Left colon (tissue), 2 donors: ENCODE measurements at regions of chr12 and their contacts with region 1.

Region 1: GRCh38 chr12:39764944-39765560 is 145.4 kb upstream of the ABCD2 start:
- DNase-seq: no peak
- ATAC-seq: peak; percentile 80

Region 2: GRCh38 chr12:39378341-39378740 is 386.7 kb before region 1 on chr12:
- intact Hi-C with region 1: no loop called
- DNase-seq: no peak
- ATAC-seq: no peak

Region 3: DNA sequence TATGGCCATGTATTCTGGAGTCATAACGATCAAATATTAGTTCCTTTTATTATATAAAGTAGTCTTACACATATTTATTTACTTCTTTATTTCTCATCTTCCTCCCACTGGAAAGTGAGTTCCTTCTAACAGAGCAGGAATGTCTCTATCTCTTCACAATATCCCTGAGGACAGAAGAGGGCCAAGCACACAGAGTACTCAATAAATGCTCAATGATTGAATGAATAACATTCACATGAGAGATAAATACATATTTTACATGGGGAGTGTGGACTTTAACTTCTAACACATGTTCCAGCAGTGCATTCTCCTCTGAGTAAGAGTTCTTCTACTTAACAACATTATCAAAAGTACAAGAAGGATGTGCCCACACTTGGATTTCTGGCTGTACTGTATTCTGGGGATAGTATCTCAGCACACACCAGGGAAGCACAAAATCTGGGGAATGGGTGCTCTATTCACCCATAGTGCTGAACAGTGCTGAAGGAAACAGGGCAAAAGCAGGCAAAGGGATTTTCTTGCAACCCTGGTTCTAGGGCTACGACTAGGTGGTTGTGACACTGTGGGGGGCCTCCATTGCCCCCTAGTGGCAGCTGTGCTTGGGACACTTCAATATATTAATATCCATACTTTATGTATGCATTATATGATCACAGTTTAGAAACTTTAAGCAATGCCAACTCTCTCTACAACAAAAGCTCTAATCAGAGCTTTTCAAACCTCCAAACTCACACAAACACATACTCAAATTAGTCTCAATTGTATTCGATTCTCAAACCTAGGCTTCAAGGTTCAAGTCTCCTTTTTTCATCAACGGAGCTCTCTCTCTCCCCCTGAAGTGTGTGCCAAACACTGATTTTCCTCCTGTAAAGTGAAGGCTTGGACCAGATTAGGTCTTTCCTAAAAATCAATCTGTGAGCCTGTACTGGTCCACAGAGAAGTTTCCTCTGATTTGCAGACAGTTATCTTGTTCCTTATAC is 225.4 kb after region 1 on chr12:
- intact Hi-C with region 1: loop called in 1 of 2 experiments (anchors 5 kb)
- DNase-seq: peak in 1 of 2 donors; percentile 79
- ATAC-seq: peak; percentile 82

Region 4: GRCh38 chr12:40107098-40107802 is 342.2 kb after region 1 on chr12:
- intact Hi-C with region 1: loop called in 1 of 2 experiments (anchors 10 kb)
- DNase-seq: peak; percentile 82 to 98
- ATAC-seq: peak; percentile 37